Breast epithelium (tissue), 4 donors: ENCODE measurements at regions of chr16 and their contacts with region 1.

Region 1: DNA sequence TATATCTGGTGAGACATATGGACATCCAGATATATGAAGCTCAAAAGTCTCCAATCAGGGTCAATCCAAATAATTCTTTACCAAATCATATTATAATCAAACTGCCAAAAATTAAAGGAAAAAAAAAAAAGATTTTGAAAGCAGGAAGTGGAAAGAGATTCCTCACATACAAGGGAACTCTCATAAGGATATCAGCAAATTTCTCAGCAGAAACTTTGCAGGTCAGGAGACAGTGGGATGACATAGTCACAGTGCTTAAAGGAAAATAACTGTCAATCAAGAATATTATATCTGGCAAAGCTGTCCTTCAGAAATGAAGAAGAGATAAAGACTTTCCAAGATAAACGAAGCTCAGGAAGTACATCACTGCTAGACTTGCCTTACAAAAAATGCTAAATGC is 40.0 kb upstream of the CDYL2 start:
- DNase-seq: no peak
- H3K4me3 ChIP-seq: no peak overlapping the region
- H3K27ac ChIP-seq: no peak overlapping the region
- H3K4me1 ChIP-seq: no peaks in the 10 kb centered on the region
- H3K27me3 ChIP-seq: no peaks in the 10 kb centered on the region
- CTCF ChIP-seq: no peak
- POLR2A ChIP-seq: no peak

Region 2: GRCh38 chr16:80613747-80614655 is 230.4 kb before region 1 on chr16:
- intact Hi-C with region 1: loop called (anchors 5 kb)
- DNase-seq: peak; percentile 75 to 87
- H3K4me3 ChIP-seq: no peak overlapping the region
- H3K27ac ChIP-seq: peak overlapping the region; percentile 72 to 86
- H3K4me1 ChIP-seq: peaks cover 0 to 5% of the 10 kb centered on the region in 2 donors
- H3K27me3 ChIP-seq: no peaks in the 10 kb centered on the region
- CTCF ChIP-seq: no peak
- POLR2A ChIP-seq: no peak

Region 3: GRCh38 chr16:80883159-80883642 is 38.8 kb after region 1 on chr16:
- intact Hi-C with region 1: no loop called
- DNase-seq: no peak
- H3K4me3 ChIP-seq: no peak overlapping the region
- H3K27ac ChIP-seq: no peak overlapping the region
- H3K4me1 ChIP-seq: no peaks in the 10 kb centered on the region
- H3K27me3 ChIP-seq: peaks cover 0 to 4% of the 10 kb centered on the region in 2 donors
- CTCF ChIP-seq: no peak
- POLR2A ChIP-seq: no peak